ENCODE measurements at regions of chr2 and their contacts with region 1.

Region 1: DNA sequence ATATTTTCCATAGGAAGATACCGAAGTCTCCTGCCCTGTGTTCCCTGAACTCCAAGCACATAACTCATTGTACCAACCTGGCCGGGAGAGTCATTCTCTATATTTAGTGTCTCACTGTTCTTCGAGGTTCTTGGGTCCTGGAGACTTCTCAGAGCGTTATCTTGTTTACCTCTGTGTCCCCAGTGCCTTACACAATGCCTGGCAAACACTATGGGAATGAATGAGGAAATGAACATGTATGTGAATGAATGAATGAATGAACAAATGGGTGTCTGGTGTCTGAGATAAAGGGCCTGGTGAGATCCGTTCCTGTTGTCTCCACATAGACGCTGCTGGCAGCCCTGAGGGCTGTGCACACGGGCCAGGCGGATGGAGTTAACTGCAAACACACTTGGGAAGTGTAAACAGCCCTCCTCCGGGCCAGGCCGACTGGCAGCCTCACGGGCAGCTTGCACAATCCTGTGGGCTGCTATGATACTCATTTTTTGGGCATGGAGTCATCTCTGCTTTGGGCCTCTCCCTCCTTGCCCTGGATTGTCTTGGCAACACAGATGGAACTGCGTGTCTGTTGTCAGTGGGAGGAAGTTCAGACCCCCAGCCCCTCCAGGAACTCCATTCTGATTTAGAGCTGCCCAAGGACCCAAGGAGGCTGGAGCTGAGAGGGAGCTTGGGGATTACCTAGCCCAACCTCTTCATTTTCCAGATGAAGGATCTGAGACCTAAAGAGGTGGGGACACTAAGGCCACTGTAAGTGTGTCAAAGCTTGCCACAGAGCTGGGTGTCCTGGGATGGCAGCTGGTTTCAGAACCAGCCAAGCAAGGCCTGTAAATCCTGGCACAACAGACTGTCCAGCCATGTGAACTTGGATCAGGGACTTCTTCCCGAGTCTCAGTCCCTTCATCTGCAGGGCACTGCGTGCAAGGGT is 124.4 kb downstream of the INHBB start:
- DNase-seq: peak; percentile 95
- ATAC-seq: peak; percentile 70
- H3K4me3 ChIP-seq: peak overlapping the region in 2 of 3 experiments; percentile 1 to 27; a peak in 2 of 6 replicates
- H3K27ac ChIP-seq: peak overlapping the region; percentile 36
- H3K4me1 ChIP-seq: peaks cover 87% of the 10 kb centered on the region
- H3K27me3 ChIP-seq: no peaks in the 10 kb centered on the region
- CTCF ChIP-seq: peak; percentile 26; the same call in 1 of the 2 replicates
- EP300 ChIP-seq: peak in 1 of 2 experiments; percentile 85; a peak in 3 of 4 replicates
- POLR2A ChIP-seq: peak in 1 of 2 experiments; percentile 60; a peak in 2 of 4 replicates
- RAD21 ChIP-seq: peak; percentile 34; the same call in 1 of the 2 replicates

Region 2: DNA sequence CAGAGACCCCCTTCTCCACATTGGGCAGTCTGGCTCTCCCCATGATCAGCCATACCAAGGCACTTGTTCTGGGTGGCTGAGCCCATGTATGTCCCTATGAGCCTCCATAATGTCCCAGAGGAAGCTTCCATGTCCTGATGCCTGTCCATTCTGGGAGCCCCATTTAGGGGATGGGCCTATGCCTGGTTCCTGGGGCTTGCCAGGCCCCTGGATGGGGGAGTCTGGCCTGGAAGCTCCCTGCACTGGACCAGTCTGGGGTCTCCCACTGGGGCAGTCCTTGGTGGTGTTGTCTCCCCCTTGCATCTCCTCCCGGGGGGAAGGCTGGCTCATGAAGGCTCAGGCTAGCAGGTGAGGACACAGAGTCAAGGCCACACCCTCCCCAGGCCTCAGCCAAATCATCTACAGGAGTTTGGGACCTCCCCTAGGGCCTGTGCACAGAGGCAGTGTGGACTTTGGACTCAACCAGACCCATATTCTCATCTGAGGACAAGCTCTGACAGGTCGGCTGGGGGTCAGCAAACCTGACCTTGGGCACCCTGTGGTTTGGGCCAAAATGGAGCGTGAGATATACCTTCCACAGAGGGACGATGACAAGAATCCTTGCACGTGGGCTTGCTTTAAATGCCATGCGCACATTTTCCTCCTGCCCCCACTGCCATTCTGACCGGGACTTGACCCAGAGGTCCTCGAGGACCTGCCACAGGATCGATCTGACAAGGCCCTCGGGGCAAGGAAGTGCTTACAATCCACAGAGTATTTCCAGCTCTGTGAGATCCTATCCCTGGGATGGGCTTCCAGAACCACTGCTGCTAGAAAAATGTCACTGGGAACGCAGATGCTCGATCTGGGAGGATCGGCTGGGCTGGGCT is 85.6 kb before region 1 on chr2:
- CTCF ChIA-PET with region 1: no interaction called
- POLR2A ChIA-PET with region 1: interaction called, 10 read pairs
- in situ Hi-C with region 1: no loop called
- intact Hi-C with region 1: no loop called
- DNase-seq: peak; percentile 82
- ATAC-seq: peak; percentile 68
- H3K4me3 ChIP-seq: no peak overlapping the region
- H3K27ac ChIP-seq: no peak overlapping the region
- H3K4me1 ChIP-seq: peaks cover 22% of the 10 kb centered on the region
- H3K27me3 ChIP-seq: peaks cover 4 to 6% of the 10 kb centered on the region in 2 experiments; a peak in 3 of 5 replicates
- CTCF ChIP-seq: no peak
- EP300 ChIP-seq: no peak
- POLR2A ChIP-seq: no peak
- RAD21 ChIP-seq: no peak

Region 3: DNA sequence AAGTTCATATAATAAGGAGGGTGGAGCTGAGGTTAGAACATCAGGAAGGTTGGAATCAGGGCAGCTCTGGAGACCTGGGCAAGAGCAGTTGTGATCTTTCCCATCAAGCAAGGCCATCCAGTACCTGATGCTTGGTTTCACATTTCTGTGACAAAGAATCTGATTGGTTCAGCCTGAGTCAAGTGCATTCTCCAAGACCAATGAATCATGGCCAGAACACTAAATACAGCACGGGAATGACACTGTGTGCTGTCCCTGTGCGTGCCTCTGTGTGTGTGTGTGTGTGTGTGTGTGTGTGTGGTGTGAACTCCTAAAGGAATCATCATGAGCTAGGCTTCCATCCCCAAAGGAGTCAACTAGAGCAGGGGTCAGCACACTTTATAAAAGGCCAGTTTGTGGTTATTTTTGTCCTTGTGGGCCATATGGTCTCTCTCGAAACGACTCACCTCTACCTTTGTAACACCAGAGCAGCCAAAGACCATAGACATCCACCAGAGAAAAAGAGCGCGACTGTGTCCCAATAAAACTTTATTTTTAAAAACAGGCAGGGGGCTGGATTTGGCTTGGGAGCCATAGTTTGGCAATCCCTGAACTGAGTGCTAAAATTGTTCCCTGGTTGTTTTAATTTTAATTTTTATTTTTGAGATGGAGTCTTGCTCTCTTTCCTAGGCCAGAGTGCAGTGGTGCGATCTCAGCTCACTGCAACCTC is 24.7 kb before region 1 on chr2:
- CTCF ChIA-PET with region 1: no interaction called
- POLR2A ChIA-PET with region 1: interaction called, 30 read pairs
- in situ Hi-C with region 1: no loop called
- intact Hi-C with region 1: loop called (anchors 1 kb)
- DNase-seq: peak; percentile 77
- ATAC-seq: peak; percentile 20; the same call in 2 of the 3 replicates
- H3K4me3 ChIP-seq: no peak overlapping the region
- H3K27ac ChIP-seq: no peak overlapping the region
- H3K4me1 ChIP-seq: peaks cover 31% of the 10 kb centered on the region
- H3K27me3 ChIP-seq: peaks cover 20 to 86% of the 10 kb centered on the region in 2 experiments; a peak in 4 of 5 replicates
- CTCF ChIP-seq: no peak
- EP300 ChIP-seq: no peak
- POLR2A ChIP-seq: no peak
- RAD21 ChIP-seq: no peak

Region 4: DNA sequence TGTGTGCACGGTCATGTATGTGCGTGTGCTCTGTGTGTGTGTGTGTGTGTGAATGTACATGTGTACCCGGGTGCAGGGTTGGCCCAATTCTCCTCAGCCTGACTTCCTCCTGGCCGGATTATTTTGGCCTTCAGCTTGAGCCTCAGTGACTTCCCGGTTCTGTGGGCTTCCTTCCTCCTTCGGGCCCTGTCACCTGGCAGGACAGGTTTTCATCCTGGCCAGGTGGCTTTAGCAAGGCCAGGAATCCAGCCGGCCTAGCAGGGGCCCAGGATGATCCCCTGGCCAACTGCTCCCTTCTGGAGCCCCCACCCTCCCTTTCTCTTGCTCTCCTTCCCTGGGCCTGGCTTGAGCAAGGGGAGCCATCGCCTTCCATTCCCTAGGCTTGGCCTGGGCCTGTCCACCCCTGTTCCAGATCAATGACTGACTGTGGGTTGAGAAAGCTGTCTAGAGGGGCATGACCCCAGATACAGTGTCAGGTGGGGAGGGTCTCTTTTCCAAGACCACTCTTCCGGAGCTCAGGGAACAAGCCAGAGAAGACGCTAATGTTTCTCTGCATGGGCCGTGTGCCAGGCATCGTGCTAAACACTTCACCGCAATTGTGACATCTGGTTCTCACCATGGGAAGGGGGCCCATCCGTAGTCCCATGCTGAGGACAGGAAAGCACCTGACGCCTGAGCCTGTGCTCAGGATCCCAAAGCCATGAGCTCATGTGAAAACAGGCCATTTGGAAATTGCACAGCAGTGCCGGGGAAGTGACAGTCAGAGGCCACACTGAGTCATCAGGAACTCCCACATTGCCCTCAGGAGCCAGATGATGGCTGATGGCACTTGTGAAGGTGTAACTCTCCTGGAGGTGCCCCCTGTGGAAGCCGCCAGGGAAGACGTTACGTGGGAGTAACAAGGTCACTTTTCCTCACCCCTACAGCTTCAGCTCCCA is 16.4 kb after region 1 on chr2:
- CTCF ChIA-PET with region 1: no interaction called
- POLR2A ChIA-PET with region 1: interaction called, 159 read pairs
- in situ Hi-C with region 1: no loop called
- intact Hi-C with region 1: loop called (anchors 1 kb)
- DNase-seq: peak; percentile 80
- ATAC-seq: peak; percentile 63
- H3K4me3 ChIP-seq: no peak overlapping the region
- H3K27ac ChIP-seq: no peak overlapping the region
- H3K4me1 ChIP-seq: peaks cover 42% of the 10 kb centered on the region
- H3K27me3 ChIP-seq: peaks cover 0 to 5% of the 10 kb centered on the region in 2 experiments; a peak in 2 of 5 replicates
- CTCF ChIP-seq: no peak
- EP300 ChIP-seq: no peak
- POLR2A ChIP-seq: no peak
- RAD21 ChIP-seq: no peak

Region 5: DNA sequence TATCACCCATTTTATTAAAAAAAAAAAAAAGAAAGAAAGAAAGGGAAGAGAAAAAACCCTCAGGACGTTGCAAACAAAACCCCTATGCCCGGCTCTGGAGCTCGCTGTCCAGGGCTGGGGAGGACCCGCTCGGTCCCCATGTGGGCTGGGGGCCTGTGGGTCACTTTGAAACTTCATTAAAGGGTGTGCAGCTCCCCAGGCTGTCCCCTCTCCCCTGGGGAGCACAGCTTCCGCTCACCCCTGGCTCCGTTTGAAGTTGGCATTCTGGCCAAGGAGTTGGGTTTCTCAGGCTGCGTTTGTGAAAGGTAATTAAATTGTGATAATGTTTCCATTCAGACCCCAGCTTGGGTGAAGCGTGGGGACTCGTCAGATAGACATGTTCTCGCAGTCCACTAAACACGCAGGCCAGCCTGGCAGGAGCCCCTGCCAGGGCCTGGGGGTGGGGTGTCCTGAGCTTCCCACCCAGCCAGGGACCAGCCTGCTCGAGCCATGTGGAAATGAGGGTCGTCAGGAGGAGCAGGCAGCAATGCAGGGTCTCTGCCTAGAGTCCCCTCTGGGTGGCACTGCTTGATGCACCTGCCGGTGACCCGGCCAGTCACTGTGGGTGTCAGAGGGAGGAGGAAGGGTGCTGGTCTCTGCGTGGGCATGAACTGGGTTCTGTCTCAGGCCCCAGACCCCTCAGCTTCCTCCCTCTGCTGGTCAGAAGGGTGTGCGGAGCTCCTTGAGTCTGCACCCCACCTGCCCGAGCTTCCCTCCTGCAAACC is 41.8 kb after region 1 on chr2:
- CTCF ChIA-PET with region 1: no interaction called
- POLR2A ChIA-PET with region 1: interaction called, 16 read pairs
- in situ Hi-C with region 1: no loop called
- intact Hi-C with region 1: loop called (anchors 2 kb)
- DNase-seq: no peak
- ATAC-seq: peak; percentile 43
- H3K4me3 ChIP-seq: no peak overlapping the region
- H3K27ac ChIP-seq: no peak overlapping the region
- H3K4me1 ChIP-seq: peaks cover 35% of the 10 kb centered on the region
- H3K27me3 ChIP-seq: peaks cover 10 to 38% of the 10 kb centered on the region in 2 experiments; a peak in 4 of 5 replicates
- CTCF ChIP-seq: peak; percentile 68
- EP300 ChIP-seq: no peak
- POLR2A ChIP-seq: no peak
- RAD21 ChIP-seq: peak; percentile 55

Region 6: GRCh38 chr2:120539937-120540718 is 69.8 kb after region 1 on chr2:
- CTCF ChIA-PET with region 1: no interaction called
- POLR2A ChIA-PET with region 1: interaction called, 74 read pairs
- in situ Hi-C with region 1: no loop called
- intact Hi-C with region 1: no loop called
- DNase-seq: peak; percentile 94
- ATAC-seq: peak; percentile 93
- H3K4me3 ChIP-seq: peak overlapping the region in 2 of 3 experiments; percentile 11 to 34; a peak in 1 of 6 replicates
- H3K27ac ChIP-seq: peak overlapping the region; percentile 82
- H3K4me1 ChIP-seq: peaks cover 73% of the 10 kb centered on the region
- H3K27me3 ChIP-seq: peaks cover 0 to 17% of the 10 kb centered on the region in 2 experiments; a peak in 3 of 5 replicates
- CTCF ChIP-seq: 0 out of 2 replicates have a peak, but pooled peaks have one; percentile 20
- EP300 ChIP-seq: peak; percentile 30 to 69; a peak in 2 of 4 replicates
- POLR2A ChIP-seq: peak; percentile 59 to 78; a peak in 3 of 4 replicates
- RAD21 ChIP-seq: peak; percentile 54; the same call in 1 of the 2 replicates

Region 7: GRCh38 chr2:120566331-120567035 is 96.2 kb after region 1 on chr2:
- CTCF ChIA-PET with region 1: no interaction called
- POLR2A ChIA-PET with region 1: interaction called, 11 read pairs
- in situ Hi-C with region 1: no loop called
- intact Hi-C with region 1: no loop called
- DNase-seq: no peak
- ATAC-seq: no peak
- H3K4me3 ChIP-seq: no peak overlapping the region
- H3K27ac ChIP-seq: no peak overlapping the region
- H3K4me1 ChIP-seq: peaks cover 57% of the 10 kb centered on the region
- H3K27me3 ChIP-seq: peaks cover 38 to 88% of the 10 kb centered on the region in 2 experiments
- CTCF ChIP-seq: no peak
- EP300 ChIP-seq: no peak
- POLR2A ChIP-seq: no peak
- RAD21 ChIP-seq: no peak

Measured in HepG2 (cell line).